Ascending aorta (tissue), 2 donors: ENCODE measurements at regions of chr21 and their contacts with region 1.

Region 1: DNA sequence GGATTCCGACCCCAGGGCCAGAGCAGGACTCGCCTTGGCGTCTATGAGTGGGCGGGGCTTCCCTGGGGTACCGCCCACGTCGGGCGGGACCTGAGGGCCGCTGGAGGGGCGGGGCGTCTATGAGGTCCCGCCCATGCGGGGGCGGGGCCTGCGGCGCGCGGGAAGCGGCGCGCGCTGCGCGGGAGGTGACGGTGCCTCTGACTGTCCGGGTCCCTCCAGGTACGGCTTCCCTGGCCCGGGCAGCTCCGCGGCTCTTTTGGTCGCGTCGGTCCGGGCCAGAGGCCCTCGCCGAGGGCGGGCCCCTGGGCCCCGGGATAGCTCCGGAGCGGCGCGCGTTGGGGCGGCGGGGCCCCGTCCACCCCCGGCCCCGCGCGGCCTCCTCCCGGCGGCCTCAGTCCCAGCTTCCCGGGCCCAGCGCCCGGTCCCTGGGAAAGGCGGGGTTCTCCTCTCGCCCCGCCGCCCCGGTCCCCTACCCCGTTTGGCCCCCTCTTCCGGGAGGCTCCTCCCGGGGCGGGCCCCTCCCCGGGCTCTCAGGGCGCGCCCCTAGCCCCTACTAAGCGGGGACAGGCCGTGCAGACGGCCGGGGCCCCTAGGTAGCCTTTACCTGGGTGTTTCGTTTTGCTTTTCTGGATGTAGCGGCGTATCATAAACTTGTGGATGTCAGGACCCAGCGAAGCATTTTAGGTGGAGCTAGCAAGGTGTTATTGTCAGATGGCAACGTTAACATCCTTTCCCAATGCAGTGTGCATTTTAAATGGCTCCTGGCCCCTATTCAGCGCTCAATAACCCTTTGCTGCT is at the start of gene CHAF1B:
- DNase-seq: peak; percentile 14 to 86
- H3K4me3 ChIP-seq: peak within 1 kb of the TSS; percentile 73 to 80
- H3K27ac ChIP-seq: peak within 1 kb of the TSS; percentile 72 to 73
- H3K4me1 ChIP-seq: no peaks in the 10 kb centered on the region
- H3K27me3 ChIP-seq: no peaks in the 10 kb centered on the region
- CTCF ChIP-seq: no peak
- total RNA-seq, gene CHAF1B: 0.43 TPM

Region 2: DNA sequence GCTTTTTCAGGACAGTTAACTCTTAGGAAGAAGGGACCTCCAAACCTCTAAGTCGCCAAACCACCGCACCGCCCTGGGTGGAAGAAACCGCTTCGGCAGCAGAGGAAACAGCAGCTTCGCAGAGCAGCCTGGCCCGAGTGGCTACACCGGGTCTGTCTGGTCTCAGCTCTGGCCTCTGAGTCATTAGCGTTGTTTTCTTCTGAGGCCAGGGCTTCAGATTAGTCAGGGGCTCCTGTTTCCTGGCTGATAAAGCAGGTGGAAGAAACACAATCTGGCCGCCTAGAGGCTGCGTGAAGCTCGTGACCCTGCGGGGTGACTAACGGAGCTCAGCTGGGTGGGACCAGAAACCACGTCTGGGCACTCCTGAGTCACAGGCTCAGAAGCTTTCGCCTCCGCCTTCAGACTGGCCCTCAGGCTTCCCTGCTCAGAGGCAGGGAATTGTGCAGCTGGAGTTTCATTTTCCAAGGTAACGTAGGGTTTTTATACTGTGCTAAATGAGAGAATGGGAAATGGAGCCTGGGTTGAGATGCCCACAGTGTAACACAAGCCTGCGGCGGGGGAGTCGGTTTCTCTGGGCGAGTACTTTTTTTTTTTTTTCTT is 44.6 kb after region 1 on chr21:
- intact Hi-C with region 1: loop called (anchors 5 kb)
- DNase-seq: peak; percentile 88 to 95
- H3K4me3 ChIP-seq: peak overlapping the region; percentile 35 to 53
- H3K27ac ChIP-seq: peak overlapping the region; percentile 79 to 87
- H3K4me1 ChIP-seq: peaks cover 0 to 15% of the 10 kb centered on the region in 2 donors
- H3K27me3 ChIP-seq: no peaks in the 10 kb centered on the region
- CTCF ChIP-seq: peak in 2 of 3 experiments; percentile 4 to 36